ENCODE measurements at regions of chr4 and their contacts with region 1.

Region 1: DNA sequence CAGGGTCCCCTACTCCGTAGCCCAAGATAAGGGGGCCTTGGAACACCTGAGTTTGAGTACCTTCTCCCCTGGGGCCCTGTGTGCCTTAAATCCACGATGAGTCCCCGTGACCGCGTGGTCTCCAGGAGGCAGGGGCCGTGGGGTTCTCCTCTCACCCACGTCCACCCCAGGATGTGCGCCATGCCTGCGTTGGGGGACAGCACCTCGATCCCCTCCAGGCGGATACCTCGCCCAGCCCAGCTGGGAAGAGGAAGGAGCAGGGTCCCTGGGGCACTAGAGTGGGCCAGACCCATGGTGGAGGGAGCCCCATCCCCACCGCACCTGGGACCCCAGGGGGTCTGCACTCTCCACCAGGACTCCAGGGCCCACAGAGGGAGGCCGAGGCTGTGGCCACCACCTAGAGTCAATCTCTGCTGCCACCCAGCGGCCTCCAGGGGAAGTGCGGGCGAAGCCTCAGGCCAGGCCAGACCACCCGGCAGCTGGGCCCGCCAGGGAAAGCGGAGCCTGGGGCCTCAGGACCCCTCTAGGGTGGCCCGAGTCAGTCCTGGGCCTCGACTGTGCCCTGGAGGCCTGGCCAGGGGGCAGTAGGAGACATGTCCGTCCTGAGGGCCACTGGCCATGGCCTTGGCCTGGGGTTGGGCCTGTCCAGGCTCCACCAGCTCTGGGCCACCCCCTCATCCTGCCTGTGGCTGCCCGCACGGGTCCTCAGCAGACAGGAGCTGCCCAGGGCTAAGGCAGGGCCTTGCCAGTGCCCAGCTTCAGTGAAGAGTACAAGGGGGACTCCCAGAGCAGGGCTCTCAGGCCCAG is 55.0 kb downstream of the FAM53A start:
- DNase-seq: peak; percentile 46 to 82 (median 63)
- ATAC-seq: peak; percentile 53 to 84 (median 78)
- H3K4me3 ChIP-seq: no peak overlapping the region
- H3K27ac ChIP-seq: no peak overlapping the region
- H3K4me1 ChIP-seq: peaks cover 0 to 10% (median 0%) of the 10 kb centered on the region in 12 donors
- H3K27me3 ChIP-seq: no peaks in the 10 kb centered on the region
- CTCF ChIP-seq: peak; percentile 88 to 99 (median 97)
- POLR2A ChIP-seq: no peak

Region 2: DNA sequence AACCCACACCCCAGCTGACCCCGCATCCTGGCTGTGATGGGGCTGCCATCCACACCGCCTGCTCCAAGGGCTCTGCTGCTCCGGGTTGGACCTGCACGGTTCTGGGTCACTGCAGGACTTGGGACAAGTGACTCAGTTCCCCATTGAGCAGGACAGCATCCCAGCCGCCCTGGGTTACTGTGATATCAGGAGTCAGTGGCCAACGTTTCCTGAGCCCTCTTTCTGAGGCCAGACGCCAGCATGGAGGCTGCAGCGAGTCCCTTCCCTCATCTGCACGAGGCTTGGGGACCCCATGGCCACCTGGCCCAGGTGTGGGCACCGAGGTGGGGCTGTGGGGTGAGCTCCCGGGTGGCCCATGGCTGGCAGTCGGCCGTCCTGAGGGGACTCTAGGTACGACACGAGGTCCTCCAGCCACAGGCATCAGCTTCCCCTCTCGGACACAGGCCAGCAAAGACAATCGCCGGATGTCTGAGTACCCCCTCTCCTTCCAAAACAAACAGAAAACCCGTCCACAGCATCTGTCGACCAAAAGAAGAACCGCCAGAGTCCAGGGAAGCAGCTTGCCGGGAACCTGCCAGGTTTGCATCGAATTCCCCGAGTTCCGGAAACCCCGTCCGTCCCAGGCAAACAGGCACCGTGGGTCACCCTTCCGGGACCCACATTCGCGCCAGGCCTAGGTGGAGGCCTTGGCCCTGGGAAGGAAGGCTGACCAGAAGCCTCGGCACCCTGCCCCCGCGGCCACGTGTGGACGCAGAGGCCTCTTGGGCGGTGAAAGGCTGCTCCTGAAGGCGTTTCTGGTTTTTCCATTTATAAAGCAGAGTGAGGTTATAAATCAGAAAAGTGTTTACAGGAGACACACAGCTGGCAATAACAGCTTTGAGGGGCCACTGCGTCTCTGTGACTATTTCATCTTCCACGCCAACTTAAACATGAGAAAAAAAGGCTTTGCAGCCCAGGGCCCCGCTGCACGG is 81.0 kb before region 1 on chr4:
- intact Hi-C with region 1: loop called in 1 of 10 experiments (anchors 10 kb)
- DNase-seq: peak; percentile 70 to 80 (median 72)
- ATAC-seq: peak; percentile 75 to 90 (median 79)
- H3K4me3 ChIP-seq: peak overlapping the region; percentile 4 to 47 (median 36)
- H3K27ac ChIP-seq: peak overlapping the region; percentile 45 to 83 (median 62)
- H3K4me1 ChIP-seq: peaks cover 0 to 25% (median 9%) of the 10 kb centered on the region in 12 donors
- H3K27me3 ChIP-seq: peaks cover 0 to 17% (median 0%) of the 10 kb centered on the region in 9 donors
- CTCF ChIP-seq: no peak
- POLR2A ChIP-seq: no peak

Region 3: DNA sequence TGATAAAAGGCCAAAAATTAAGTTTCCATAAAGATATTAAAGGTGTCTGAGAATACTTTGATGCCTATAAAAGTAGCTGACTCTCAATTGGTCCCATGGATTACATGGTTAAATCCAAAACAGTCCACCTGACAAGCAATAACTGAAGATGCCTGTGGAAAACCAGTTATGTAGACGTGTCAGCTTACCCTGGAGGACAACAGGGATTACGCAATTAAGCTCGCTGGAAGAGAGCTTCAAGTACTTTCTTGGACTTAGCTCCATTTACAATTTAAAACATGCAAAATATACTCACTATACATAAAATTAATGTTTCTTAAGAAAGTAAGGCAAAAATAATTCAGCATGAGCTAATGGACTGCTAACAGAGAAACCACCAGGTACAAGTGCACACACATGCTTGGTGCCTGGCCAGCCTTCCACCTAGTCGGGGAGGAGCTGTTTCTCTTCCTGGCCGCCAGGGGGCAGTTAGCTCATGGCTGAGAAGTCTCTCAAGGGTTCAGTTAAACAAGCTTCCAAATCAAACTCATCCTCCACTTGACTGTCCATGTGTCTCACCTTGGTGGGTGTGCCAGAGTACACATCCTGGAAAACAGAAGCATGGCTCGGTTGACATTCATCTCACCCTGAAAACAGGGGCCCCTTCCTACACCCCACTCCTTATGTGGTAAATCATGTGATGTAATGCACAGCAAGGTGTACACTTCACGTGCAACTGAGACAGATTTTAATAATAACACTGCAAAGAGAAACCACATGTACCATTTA is 64.2 kb after region 1 on chr4:
- intact Hi-C with region 1: no loop called
- DNase-seq: peak; percentile 67 to 85 (median 69)
- ATAC-seq: peak; percentile 25 to 78 (median 78)
- H3K4me3 ChIP-seq: no peak overlapping the region
- H3K27ac ChIP-seq: no peak overlapping the region
- H3K4me1 ChIP-seq: no peaks in the 10 kb centered on the region
- H3K27me3 ChIP-seq: no peaks in the 10 kb centered on the region
- CTCF ChIP-seq: peak; percentile 81 to 96 (median 90)
- POLR2A ChIP-seq: no peak

Region 4: GRCh38 chr4:1842993-1843448 is 213.9 kb after region 1 on chr4:
- intact Hi-C with region 1: no loop called
- DNase-seq: peak in 2 of 5 donors; percentile 55 to 56
- ATAC-seq: peak; percentile 51 to 73 (median 58)
- H3K4me3 ChIP-seq: no peak overlapping the region
- H3K27ac ChIP-seq: peak overlapping the region in 10 of 12 donors; percentile 26 to 69 (median 50)
- H3K4me1 ChIP-seq: peaks cover 0 to 28% (median 16%) of the 10 kb centered on the region in 12 donors
- H3K27me3 ChIP-seq: no peaks in the 10 kb centered on the region
- CTCF ChIP-seq: no peak
- POLR2A ChIP-seq: no peak

Region 5: DNA sequence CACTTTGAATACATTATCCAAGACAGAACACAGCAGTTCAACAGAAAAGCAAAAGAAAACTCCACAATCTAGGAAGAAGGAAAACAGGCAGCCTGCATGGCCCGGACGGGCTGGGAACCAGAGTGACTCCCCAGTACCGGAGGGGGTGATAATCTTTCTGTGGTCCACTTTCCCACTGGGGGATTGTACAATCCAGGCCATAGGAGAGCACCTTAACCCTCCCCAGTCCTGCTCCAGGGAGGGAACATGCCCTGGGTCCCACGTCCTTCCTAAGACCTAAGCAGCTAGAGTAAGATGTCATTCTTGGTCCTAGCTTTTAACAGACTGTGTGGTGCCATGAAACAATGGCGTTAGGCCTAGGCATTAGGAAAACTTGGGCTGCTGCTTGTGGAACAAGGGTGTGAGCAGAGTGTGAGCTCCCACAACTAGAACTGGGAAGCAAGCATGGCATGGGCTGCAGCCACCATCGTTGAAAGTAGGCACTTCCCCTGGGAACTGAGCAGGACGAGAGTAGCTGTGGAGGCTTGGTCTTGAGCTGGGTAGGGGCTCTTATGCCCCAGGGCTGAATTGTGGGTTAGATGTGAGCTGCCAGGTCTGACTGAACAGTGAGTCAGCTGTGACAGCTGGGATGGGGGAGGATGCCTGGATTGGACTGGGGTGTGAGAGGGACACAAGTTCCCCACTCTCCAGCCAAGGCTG is 472.4 kb after region 1 on chr4:
- intact Hi-C with region 1: no loop called
- DNase-seq: no peak
- ATAC-seq: no peak
- H3K4me3 ChIP-seq: no peak overlapping the region
- H3K27ac ChIP-seq: no peak overlapping the region
- H3K4me1 ChIP-seq: no peaks in the 10 kb centered on the region
- H3K27me3 ChIP-seq: peaks cover 0 to 28% (median 0%) of the 10 kb centered on the region in 9 donors
- CTCF ChIP-seq: no peak
- POLR2A ChIP-seq: no peak

Region 6: GRCh38 chr4:2468445-2469192 is 839.5 kb after region 1 on chr4 and contains the start of gene RNF4:
- intact Hi-C with region 1: no loop called
- DNase-seq: peak; percentile 97
- ATAC-seq: peak; percentile 95 to 97 (median 96)
- H3K4me3 ChIP-seq: peak within 1 kb of the TSS; percentile 71 to 100 (median 91)
- H3K27ac ChIP-seq: peak within 1 kb of the TSS; percentile 86 to 98 (median 94)
- H3K4me1 ChIP-seq: peaks cover 6 to 37% (median 24%) of the 10 kb centered on the region in 12 donors
- H3K27me3 ChIP-seq: no peaks in the 10 kb centered on the region
- CTCF ChIP-seq: peak in 1 of 12 donors; percentile 6
- POLR2A ChIP-seq: peak in 1 of 2 donors; percentile 66
- total RNA-seq, gene RNF4: 24.3 to 45.7 (median 30.8) TPM